ENCODE measurements at regions of chr6 and their contacts with region 1.

Region 1: DNA sequence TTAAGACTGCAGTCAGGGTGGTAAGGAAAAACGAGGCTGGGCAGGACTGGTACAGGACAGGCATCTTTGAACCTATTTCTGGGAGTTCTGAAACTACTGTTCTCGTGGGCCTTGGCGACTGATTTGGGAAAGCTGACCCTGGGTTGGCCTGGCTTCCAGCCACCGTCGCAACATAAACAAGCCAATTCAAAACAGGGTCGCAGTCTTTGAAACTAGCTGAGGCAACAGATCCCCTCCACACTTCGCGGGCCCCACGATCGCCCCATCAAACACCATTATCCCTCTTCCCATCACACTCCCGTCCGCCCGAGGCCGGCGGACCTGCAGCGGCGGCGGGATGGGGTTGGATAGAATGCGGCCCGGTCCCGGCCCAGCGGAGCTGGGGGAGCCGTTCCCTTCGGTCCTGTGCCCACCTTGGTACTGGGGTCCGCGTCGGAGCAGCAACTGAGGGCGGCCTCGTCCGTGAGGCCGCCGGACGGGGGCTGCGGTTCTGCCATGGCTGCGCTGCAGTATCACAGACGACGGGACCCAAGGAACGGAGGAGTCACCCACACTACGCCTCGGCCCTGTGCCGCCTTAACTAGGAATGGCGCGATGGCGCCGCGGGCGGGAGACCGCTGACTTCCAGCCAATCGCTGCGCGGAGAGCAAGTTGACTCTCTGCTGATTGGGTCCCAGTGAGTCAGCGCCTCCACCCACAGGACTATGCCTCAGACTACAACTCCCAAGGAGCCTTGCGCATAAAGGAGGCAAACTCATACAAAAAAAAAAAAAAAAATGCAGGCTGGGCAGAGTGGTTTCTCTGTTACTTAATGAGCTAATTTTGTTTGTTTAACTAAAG is at the start of gene GLO1:
- DNase-seq: peak; percentile 97 to 98
- ATAC-seq: peak; percentile 100
- H3K4me3 ChIP-seq: peak within 1 kb of the TSS; percentile 80 to 98 (median 92)
- H3K27ac ChIP-seq: peak within 1 kb of the TSS; percentile 90 to 95 (median 94)
- H3K4me1 ChIP-seq: no peaks in the 10 kb centered on the region
- H3K27me3 ChIP-seq: no peaks in the 10 kb centered on the region
- CTCF ChIP-seq: no peak
- POLR2A ChIP-seq: peak; percentile 77 to 91
- total RNA-seq, gene GLO1: 86.3 to 138 (median 116) TPM

Region 2: DNA sequence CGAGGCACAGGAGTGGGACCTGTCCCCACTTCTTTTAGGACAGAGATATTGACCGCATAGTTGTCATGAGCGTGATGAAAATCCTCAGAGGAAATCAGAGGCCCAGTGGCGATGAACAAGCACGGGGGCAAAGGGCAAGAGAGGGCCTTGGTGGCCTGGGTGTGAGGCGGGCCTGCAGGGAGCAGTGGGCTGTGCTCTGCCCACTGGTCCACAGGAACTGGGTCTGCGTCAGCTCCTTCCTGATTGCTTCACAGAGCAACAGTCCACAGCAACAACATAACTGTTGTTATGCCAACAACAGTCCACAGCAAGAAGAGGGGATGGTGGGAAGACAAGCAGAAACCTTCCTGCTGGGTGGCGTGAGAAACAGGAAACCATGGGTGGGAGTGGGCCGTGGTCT is 547.6 kb before region 1 on chr6:
- in situ Hi-C with region 1: no loop called
- intact Hi-C with region 1: no loop called
- DNase-seq: no peak
- ATAC-seq: no peak
- H3K4me3 ChIP-seq: no peak overlapping the region
- H3K27ac ChIP-seq: no peak overlapping the region
- H3K4me1 ChIP-seq: no peaks in the 10 kb centered on the region
- H3K27me3 ChIP-seq: no peaks in the 10 kb centered on the region
- CTCF ChIP-seq: no peak
- POLR2A ChIP-seq: no peak

Region 3: DNA sequence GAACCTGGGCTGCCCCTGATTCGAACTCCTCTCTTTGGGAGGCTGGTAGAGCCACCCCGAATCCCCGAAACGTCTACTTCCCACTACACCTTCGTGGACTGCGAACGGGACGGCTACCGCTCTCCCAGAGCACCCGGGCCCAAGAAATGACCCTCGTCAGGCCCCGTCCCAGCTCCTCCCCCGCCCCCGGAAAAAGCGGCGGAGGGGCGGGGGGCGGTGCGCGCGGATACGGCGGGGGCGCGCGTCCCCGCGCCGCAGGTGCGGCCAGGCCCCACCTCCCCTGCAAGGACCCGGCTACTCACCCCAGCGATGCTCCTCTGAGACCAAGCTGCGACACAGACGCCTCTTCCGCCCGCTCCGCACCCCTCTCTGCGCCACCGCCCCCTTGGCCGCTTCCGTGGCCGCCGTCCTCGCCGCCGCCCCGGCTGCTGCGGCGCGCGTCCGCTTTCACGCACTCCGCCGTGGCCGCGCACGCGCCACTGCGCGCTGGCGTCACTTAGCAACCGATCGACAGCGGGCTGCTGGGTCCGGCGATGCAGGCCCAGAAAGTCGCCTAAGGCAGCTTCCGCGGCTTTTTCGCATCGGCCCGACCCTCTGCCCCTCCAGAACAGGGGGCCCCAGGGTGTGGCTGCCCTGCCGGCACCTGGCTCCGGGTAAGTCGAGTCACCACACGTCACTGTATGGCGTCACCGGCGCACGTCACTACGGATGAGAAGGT is 63.1 kb before region 1 on chr6 and contains the start of gene BTBD9:
- in situ Hi-C with region 1: no loop called
- intact Hi-C with region 1: loop called (anchors 1 kb)
- DNase-seq: peak; percentile 47 to 70
- ATAC-seq: peak; percentile 88 to 91
- H3K4me3 ChIP-seq: peak within 1 kb of the TSS; percentile 75 to 97 (median 85)
- H3K27ac ChIP-seq: peak within 1 kb of the TSS; percentile 78 to 94 (median 90)
- H3K4me1 ChIP-seq: peaks cover 21 to 28% of the 10 kb centered on the region in 2 donors
- H3K27me3 ChIP-seq: no peaks in the 10 kb centered on the region
- CTCF ChIP-seq: no peak
- POLR2A ChIP-seq: peak; percentile 41 to 54
- total RNA-seq, gene BTBD9: 5.5 to 14.1 (median 6.3) TPM

Measured in gastrocnemius medialis (tissue), 4 donors.